ENCODE measurements at regions of chr7 and their contacts with region 1.

Region 1: GRCh38 chr7:135704074-135704473 is 23.9 kb downstream of the SLC13A4 start:
- DNase-seq: peak in 1 of 2 experiments; percentile 82
- H3K4me3 ChIP-seq: no peak overlapping the region
- H3K27ac ChIP-seq: no peak overlapping the region
- H3K4me1 ChIP-seq: no peaks in the 10 kb centered on the region; a peak in 1 of 7 replicates
- H3K27me3 ChIP-seq: no peaks in the 10 kb centered on the region
- CTCF ChIP-seq: peak; percentile 84 to 91 (median 91)
- EP300 ChIP-seq: no peak
- POLR2A ChIP-seq: no peak
- RAD21 ChIP-seq: peak; percentile 63 to 75

Region 2: DNA sequence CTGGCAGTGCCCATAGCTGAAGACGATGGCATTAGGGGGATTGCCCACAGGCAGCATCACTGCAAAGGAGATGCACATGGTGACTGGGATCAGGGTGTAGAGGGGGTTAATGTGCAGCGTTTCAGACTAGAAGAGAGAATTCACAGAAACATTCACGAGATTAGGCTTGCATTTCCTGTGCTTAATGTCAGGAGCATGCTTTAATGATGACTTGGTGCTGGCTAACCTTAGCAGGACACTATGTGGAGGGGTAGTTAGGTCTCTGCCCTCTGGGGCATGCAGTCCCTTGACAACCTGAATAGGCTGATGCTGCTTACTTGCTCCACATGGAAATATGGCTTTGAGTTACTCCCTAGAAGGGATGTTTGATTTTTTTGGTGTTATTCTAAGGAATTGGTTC is 19.9 kb before region 1 on chr7:
- CTCF ChIA-PET with region 1: interaction called, 14 read pairs
- POLR2A ChIA-PET with region 1: no interaction called
- DNase-seq: no peak
- H3K4me3 ChIP-seq: no peak overlapping the region
- H3K27ac ChIP-seq: no peak overlapping the region
- H3K4me1 ChIP-seq: peaks cover 0 to 3% (median 0%) of the 10 kb centered on the region in 4 experiments; a peak in 2 of 7 replicates
- H3K27me3 ChIP-seq: no peaks in the 10 kb centered on the region
- CTCF ChIP-seq: no peak
- EP300 ChIP-seq: no peak
- POLR2A ChIP-seq: no peak
- RAD21 ChIP-seq: no peak

Region 3: GRCh38 chr7:135690566-135690965 is 13.5 kb before region 1 on chr7:
- CTCF ChIA-PET with region 1: interaction called, 37 read pairs
- POLR2A ChIA-PET with region 1: no interaction called
- DNase-seq: no peak
- H3K4me3 ChIP-seq: no peak overlapping the region
- H3K27ac ChIP-seq: no peak overlapping the region
- H3K4me1 ChIP-seq: no peaks in the 10 kb centered on the region
- H3K27me3 ChIP-seq: no peaks in the 10 kb centered on the region
- CTCF ChIP-seq: no peak
- EP300 ChIP-seq: no peak
- POLR2A ChIP-seq: no peak
- RAD21 ChIP-seq: no peak

Region 4: DNA sequence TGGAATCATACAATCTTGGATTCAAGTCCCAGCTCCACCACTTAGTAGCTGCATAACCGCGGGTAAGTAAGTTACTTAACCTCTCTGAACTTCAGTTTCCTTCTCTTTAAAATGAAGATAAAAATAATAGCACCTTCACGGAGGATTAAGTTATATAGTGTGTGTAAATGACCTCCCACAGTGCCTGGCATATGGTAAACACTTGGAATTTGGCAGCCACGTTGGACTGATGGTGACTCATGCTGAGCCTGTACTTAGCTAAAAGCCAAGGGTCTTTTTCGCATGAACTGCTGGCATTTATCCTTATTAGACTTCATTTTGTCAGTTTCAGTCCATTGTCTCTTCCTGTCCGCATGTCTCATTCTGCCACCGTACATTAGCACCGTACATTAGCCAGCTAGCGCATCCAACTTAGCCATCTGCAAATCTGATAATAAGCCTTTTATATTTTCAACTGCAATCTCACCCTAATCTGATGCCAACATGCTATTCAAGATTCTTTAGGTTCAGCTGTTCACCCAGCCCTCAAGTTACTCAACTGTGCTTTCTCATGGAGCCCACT is 12.7 kb after region 1 on chr7:
- CTCF ChIA-PET with region 1: interaction called, 110 read pairs
- POLR2A ChIA-PET with region 1: interaction called, 4 read pairs
- DNase-seq: no peak
- H3K4me3 ChIP-seq: no peak overlapping the region
- H3K27ac ChIP-seq: no peak overlapping the region
- H3K4me1 ChIP-seq: peaks cover 0 to 8% (median under 1%) of the 10 kb centered on the region in 4 experiments; a peak in 2 of 7 replicates
- H3K27me3 ChIP-seq: no peaks in the 10 kb centered on the region
- CTCF ChIP-seq: no peak
- EP300 ChIP-seq: no peak
- POLR2A ChIP-seq: no peak
- RAD21 ChIP-seq: no peak

Measured in H1 (cell line).